Dendritic cell treated with granulocyte-macrophage colony-stimulating factor and Interleukin-4, amounts not matched to agents 40 ng/mL and 50 ng/mL, for 4 days (primary cell): ENCODE measurements at regions of chr16 and their contacts with region 1.

Region 1: DNA sequence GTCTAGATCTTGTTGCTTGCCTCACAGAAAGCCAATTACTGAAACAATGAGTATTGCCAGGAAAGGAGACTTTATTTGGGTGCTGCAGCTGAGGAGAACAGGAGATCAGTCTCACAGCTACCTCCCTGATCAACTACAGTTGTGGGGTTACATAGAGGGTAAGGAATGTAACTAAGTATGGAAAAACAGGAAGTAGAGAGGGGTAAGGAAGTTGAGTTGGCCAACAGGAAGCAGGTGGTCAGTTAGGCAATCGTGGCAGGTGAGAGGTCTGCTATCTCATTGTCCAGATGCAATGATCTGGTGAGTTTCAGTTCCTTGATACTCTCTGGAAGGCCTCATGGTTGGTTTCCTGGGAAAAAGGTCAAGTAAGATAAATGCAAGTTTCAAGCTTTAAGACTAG is 333.1 kb upstream of the GOT2 start:
- H3K4me3 Mint-ChIP-seq: no peak overlapping the region
- H3K27ac Mint-ChIP-seq: peak overlapping the region; percentile 69
- H3K4me1 Mint-ChIP-seq: peaks cover 19% of the 10 kb centered on the region
- H3K27me3 Mint-ChIP-seq: no peaks in the 10 kb centered on the region

Region 2: GRCh38 chr16:59148056-59148768 is 81.0 kb after region 1 on chr16:
- intact Hi-C with region 1: loop called (anchors 10 kb)
- H3K4me3 Mint-ChIP-seq: no peak overlapping the region
- H3K27ac Mint-ChIP-seq: no peak overlapping the region
- H3K4me1 Mint-ChIP-seq: peaks cover 10% of the 10 kb centered on the region
- H3K27me3 Mint-ChIP-seq: no peaks in the 10 kb centered on the region